ENCODE measurements at regions of chr2 and their contacts with region 1.

Region 1: GRCh38 chr2:121076885-121077549 is 208.0 kb downstream of the TFCP2L1 start:
- DNase-seq: peak; percentile 84

Region 2: DNA sequence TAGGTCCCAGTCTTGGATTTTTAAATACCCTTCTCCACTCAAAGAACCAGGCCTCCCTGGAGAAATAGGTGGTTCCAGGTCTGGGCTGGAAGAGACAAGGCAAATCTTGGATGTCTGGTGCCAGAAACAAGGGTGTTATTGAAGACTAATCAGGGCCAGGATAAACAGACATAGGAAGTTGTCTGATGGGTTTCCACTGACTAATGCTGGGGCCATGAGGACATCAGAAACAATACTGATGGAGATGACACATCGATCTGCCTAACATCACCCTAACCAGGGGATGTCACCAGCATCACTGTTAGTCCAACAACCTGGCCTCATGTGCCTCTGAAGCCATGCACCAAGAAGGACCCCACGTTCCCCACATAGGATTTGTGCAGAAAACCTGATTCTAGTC is 383.9 kb before region 1 on chr2:
- in situ Hi-C with region 1: loop called (anchors 10 kb)
- DNase-seq: no peak

Region 3: GRCh38 chr2:121333834-121334558 is 257.0 kb after region 1 on chr2:
- in situ Hi-C with region 1: loop called (anchors 25 kb)
- DNase-seq: no peak

Region 4: GRCh38 chr2:121640385-121641316 is 563.6 kb after region 1 on chr2:
- in situ Hi-C with region 1: no loop called
- DNase-seq: no peak

Measured in KBM-7 (cell line).